Caco-2 (cell line): ENCODE measurements at regions of chr6 and their contacts with region 1.

Region 1: GRCh38 chr6:110873981-110874879 is at the start of gene AMD1:
- DNase-seq: peak; percentile 97
- H3K4me3 ChIP-seq: peak within 1 kb of the TSS; percentile 93
- H3K4me3 Mint-ChIP-seq: peak within 1 kb of the TSS; percentile 98
- H3K27ac Mint-ChIP-seq: peak within 1 kb of the TSS; percentile 95
- H3K4me1 ChIP-seq: peaks cover 33% of the 10 kb centered on the region
- H3K4me1 Mint-ChIP-seq: peaks cover 18% of the 10 kb centered on the region
- H3K27me3 ChIP-seq: no peaks in the 10 kb centered on the region
- H3K27me3 Mint-ChIP-seq: no peaks in the 10 kb centered on the region
- CTCF ChIP-seq: no peak
- total RNA-seq, gene AMD1: 84.0 and 90.0 TPM in 2 replicates

Region 2: GRCh38 chr6:110517601-110518281 is 356.5 kb before region 1 on chr6:
- CTCF ChIA-PET with region 1: no interaction called
- POLR2A ChIA-PET with region 1: no interaction called
- intact Hi-C with region 1: no loop called
- DNase-seq: no peak
- H3K4me3 ChIP-seq: no peak overlapping the region
- H3K4me3 Mint-ChIP-seq: no peak overlapping the region
- H3K27ac Mint-ChIP-seq: no peak overlapping the region
- H3K4me1 ChIP-seq: peaks cover 7% of the 10 kb centered on the region; the same call in 1 of the 2 replicates
- H3K4me1 Mint-ChIP-seq: no peaks in the 10 kb centered on the region
- H3K27me3 ChIP-seq: no peaks in the 10 kb centered on the region
- H3K27me3 Mint-ChIP-seq: no peaks in the 10 kb centered on the region
- CTCF ChIP-seq: no peak

Region 3: DNA sequence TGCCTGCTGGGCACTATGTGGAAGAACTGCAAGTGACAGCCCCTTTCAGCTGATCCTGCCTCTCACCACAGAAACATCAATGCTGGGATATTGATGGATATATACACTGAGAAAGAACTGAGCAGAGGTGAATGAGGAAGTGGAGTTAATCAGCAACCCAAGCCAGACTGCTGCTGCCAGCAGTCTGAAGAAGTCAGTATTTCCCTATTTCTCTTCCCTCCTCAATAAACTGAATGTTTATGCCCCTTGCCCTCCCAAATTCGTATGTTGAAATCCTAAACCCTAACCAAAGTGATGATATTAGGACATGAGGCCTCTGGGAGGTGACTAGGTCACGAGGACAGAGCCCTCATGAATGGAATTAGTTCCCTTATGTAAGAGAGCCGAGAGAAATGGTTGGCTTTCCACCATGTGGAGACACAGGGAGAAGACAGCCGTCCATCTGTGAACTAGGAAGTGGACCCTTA is 135.3 kb before region 1 on chr6:
- CTCF ChIA-PET with region 1: no interaction called
- POLR2A ChIA-PET with region 1: interaction called, 3 read pairs
- intact Hi-C with region 1: loop called (anchors 5 kb)
- DNase-seq: no peak
- H3K4me3 ChIP-seq: no peak overlapping the region
- H3K4me3 Mint-ChIP-seq: no peak overlapping the region
- H3K27ac Mint-ChIP-seq: no peak overlapping the region
- H3K4me1 ChIP-seq: peaks cover 3% of the 10 kb centered on the region; the same call in 1 of the 2 replicates
- H3K4me1 Mint-ChIP-seq: peaks cover 8% of the 10 kb centered on the region
- H3K27me3 ChIP-seq: no peaks in the 10 kb centered on the region
- H3K27me3 Mint-ChIP-seq: no peaks in the 10 kb centered on the region
- CTCF ChIP-seq: no peak

Region 4: DNA sequence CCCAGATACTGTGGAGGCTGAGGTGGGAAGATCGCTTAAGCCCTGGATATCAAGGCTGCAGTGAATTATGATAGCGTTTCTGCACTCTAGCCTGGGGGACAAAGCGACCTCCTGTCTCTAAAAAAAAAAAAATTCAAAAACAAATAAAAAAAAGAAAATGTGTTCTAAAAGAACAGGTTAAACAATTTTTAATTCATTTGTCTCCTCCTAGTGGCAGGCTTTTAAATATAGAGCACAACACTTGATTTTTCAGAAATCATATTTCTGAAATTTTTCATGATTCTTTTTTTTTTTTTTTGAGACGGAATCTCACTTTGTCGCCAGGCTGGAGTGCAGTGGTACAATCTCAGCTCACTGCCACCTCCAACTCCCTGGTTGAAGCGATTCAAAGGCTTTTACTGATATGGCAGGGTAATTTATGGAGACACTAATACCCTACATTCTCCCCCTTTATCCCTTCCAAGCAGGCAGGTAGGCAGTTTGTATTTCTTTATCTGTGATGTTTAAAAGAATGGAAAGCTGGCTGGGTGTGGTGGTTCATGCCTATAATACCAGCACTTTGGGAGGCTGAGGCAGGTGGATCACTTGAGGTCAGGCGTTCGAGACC is 75.6 kb after region 1 on chr6:
- CTCF ChIA-PET with region 1: no interaction called
- POLR2A ChIA-PET with region 1: interaction called, 5 read pairs
- intact Hi-C with region 1: loop called (anchors 1 kb)
- DNase-seq: no peak
- H3K4me3 ChIP-seq: no peak overlapping the region
- H3K4me3 Mint-ChIP-seq: no peak overlapping the region
- H3K27ac Mint-ChIP-seq: no peak overlapping the region
- H3K4me1 ChIP-seq: peaks cover 29% of the 10 kb centered on the region
- H3K4me1 Mint-ChIP-seq: peaks cover 31% of the 10 kb centered on the region
- H3K27me3 ChIP-seq: no peaks in the 10 kb centered on the region
- H3K27me3 Mint-ChIP-seq: no peaks in the 10 kb centered on the region
- CTCF ChIP-seq: peak; percentile 37 to 43

Region 5: DNA sequence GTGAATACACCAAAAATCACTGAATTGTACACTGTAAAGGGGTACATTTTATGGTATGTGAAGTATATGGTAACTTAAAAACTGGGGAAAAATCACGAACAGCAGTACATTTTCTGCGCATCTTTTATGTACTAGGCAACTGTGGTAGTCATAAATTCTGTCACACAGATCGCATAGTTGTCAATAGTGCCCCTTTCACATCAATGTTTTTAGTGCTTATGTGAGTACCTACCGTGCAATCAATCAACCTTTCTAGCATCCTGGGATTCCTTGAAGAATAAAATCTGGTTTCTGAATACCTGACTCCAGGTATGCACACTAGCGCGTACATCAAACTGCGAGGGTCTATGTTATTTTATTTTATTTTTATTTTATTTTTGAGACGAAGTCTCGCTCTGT is 107.0 kb after region 1 on chr6:
- CTCF ChIA-PET with region 1: interaction called, 4 read pairs
- POLR2A ChIA-PET with region 1: interaction called, 11 read pairs
- intact Hi-C with region 1: no loop called
- DNase-seq: no peak
- H3K4me3 ChIP-seq: peak overlapping the region; percentile 86
- H3K4me3 Mint-ChIP-seq: peak overlapping the region; percentile 95
- H3K27ac Mint-ChIP-seq: peak overlapping the region; percentile 98
- H3K4me1 ChIP-seq: no peaks in the 10 kb centered on the region
- H3K4me1 Mint-ChIP-seq: peaks cover 12% of the 10 kb centered on the region
- H3K27me3 ChIP-seq: no peaks in the 10 kb centered on the region
- H3K27me3 Mint-ChIP-seq: no peaks in the 10 kb centered on the region
- CTCF ChIP-seq: no peak